ENCODE measurements at regions of chr5 and their contacts with region 1.

Region 1: GRCh38 chr5:97528941-97529340 is 345.9 kb upstream of the RIOK2 start:
- DNase-seq: no peak
- H3K4me3 ChIP-seq: no peak overlapping the region
- H3K27ac ChIP-seq: no peak overlapping the region
- H3K4me1 ChIP-seq: peaks cover 0 to 4% (median 0%) of the 10 kb centered on the region in 4 experiments; a peak in 1 of 7 replicates
- H3K27me3 ChIP-seq: no peaks in the 10 kb centered on the region
- CTCF ChIP-seq: no peak
- EP300 ChIP-seq: no peak
- POLR2A ChIP-seq: no peak
- RAD21 ChIP-seq: no peak

Region 2: GRCh38 chr5:97297063-97297703 is 231.8 kb before region 1 on chr5:
- CTCF ChIA-PET with region 1: interaction called, 49 read pairs
- POLR2A ChIA-PET with region 1: no interaction called
- DNase-seq: peak; percentile 21 to 59
- H3K4me3 ChIP-seq: no peak overlapping the region
- H3K27ac ChIP-seq: no peak overlapping the region
- H3K4me1 ChIP-seq: no peaks in the 10 kb centered on the region
- H3K27me3 ChIP-seq: no peaks in the 10 kb centered on the region
- CTCF ChIP-seq: peak; percentile 19 to 97 (median 75)
- EP300 ChIP-seq: no peak
- POLR2A ChIP-seq: no peak
- RAD21 ChIP-seq: peak; percentile 87